ENCODE measurements at regions of chr22 and their contacts with region 1.

Region 1: DNA sequence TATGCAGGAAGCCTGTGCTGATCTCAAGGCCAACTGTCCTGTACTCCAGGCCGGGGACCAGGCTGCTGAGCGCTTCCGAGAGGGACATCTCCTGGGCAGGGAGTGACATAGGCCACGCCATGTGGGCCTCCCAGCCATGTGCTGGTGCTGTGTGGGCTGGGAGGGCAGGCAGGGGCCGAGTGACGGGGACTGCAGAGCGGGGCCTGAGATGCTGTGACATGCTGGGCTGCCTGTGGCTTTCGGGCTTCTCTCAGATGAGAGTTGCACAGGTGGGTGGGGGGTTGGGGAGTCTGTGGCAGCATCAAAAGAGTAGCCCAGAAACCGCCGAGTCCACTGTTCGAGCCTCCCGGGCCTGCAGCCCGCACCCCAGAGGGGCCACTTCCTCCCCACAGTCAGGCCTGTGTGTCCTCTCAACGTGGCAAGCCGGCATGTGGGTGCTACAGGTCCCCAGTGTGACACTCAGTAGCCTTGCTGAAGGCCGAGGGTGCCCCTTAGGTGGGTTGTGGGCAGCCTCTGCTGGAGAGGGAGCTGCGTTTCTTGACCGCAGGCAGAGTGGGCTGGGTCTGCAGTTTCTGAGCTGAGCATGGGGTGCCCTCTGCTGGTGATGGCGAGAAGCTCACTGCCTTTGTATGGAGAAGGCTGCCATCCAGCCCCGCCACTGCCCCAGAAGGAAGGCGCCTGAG is 101.2 kb downstream of the BCR start:
- DNase-seq: peak; percentile 91
- CTCF ChIP-seq: peak; percentile 87

Region 2: GRCh38 chr22:23168111-23169042 is 113.2 kb before region 1 on chr22:
- CTCF ChIA-PET with region 1: interaction called, 229 read pairs
- POLR2A ChIA-PET with region 1: no interaction called
- DNase-seq: no peak
- CTCF ChIP-seq: no peak

Region 3: GRCh38 chr22:23178512-23179254 is 102.9 kb before region 1 on chr22:
- CTCF ChIA-PET with region 1: interaction called, 229 read pairs
- POLR2A ChIA-PET with region 1: no interaction called
- DNase-seq: peak; percentile 79
- CTCF ChIP-seq: peak; percentile 92

Region 4: GRCh38 chr22:23187871-23188700 is 93.5 kb before region 1 on chr22:
- CTCF ChIA-PET with region 1: interaction called, 229 read pairs
- POLR2A ChIA-PET with region 1: no interaction called
- DNase-seq: no peak
- CTCF ChIP-seq: no peak

Region 5: GRCh38 chr22:23225724-23226496 is 55.6 kb before region 1 on chr22:
- CTCF ChIA-PET with region 1: no interaction called
- POLR2A ChIA-PET with region 1: no interaction called
- DNase-seq: no peak
- CTCF ChIP-seq: no peak

Region 6: DNA sequence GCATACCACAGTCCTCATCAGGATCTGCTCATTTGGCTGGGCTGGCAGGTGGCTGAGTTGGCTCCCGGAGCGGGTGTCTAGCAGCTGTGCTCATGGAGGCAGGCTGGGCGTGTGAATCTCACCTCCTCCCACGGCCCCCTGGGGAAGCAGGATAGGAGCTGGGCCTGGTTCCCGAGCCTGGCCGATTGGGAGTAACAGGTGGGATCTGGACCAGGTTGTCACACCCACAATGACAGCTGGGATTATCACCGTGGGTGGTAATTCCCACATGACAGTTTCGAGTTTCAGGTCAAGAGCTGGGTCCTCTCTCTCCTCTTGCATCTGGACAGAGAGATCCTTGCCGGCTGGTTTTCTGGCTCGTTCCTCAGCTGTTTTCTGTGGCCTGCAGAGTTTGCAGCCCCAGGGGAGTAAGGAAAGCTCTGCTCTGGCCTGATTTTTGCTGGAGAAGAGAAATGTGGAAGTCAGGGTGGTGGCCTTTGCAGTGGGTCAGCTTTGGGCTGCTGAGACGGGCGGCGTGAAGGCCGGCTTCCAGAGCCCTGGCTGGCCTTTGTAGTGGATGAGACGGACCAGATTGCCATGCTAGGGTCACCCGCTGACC is 44.2 kb before region 1 on chr22:
- CTCF ChIA-PET with region 1: interaction called, 11 read pairs
- POLR2A ChIA-PET with region 1: no interaction called
- DNase-seq: no peak
- CTCF ChIP-seq: no peak

Region 7: DNA sequence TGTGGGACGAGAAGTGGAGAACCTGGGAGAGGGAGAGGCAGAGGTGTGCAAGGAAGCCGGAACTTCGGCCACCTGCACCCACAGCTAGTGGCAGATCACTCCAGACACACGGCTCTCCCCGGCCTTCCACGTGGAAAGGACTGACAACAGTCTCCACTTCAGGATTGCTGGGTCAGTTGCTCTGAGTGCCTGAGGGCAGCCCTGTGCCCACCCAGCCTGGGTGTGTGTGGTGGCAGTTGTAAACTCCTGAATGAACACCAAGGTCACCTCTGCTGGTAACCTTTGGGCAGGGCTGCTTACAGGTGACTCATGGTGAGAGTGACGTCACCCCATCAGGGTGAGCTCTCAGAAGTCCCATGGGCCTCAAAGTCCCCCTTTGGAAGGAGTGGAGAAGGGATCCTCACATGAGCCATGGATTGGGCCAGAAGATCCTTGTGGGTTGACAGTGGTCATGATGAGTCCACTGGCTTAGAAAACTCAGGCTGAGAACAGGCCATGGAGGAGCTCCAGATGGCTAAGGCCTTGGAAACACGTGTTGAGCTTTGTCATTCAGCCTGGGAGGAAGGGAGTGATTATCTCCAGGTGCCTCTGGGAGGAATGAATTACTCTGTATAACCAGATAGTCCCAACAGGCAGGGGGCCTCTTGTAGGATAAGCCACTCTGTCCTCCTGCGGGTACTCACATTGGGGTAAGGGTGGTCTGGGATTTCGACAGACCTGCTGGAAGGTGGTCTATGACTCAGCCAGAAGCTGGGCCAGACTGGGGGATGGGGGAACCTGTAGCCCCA is 29.9 kb before region 1 on chr22:
- CTCF ChIA-PET with region 1: interaction called, 10 read pairs
- POLR2A ChIA-PET with region 1: no interaction called
- DNase-seq: no peak
- CTCF ChIP-seq: no peak

Region 8: DNA sequence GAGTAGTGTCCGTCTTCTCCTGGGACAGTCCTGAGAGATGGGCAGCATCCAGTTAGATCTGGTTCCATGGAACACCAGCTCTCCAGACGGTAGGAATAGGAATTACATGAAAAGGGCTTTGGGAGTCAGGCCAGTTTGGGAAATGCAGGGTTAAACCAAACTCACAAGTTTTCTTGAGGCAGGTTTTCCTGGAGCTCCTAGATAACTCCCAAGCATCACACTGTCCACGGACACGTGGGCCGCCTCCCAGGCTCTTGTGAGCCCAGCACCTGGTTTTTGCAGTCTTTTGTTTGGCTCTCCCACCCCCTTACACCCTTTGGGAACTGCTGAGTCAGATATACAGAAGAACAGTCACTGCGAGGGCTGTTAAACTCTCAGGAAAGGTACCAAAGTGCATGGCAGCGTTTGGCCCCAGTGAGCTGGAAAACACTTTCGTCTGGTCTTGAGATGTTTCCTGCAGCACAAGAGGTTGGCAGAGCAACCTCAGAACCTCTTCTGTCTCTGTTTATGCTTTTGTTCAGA is 11.3 kb before region 1 on chr22:
- CTCF ChIA-PET with region 1: interaction called, 32 read pairs
- POLR2A ChIA-PET with region 1: no interaction called
- DNase-seq: no peak
- CTCF ChIP-seq: no peak